ENCODE measurements at regions of chr16 and their contacts with region 1.

Region 1: GRCh38 chr16:27374804-27375425 is 27.1 kb upstream of the IL21R start:
- DNase-seq: peak in 37 of 42 donors; percentile 7 to 76 (median 54)

Region 2: GRCh38 chr16:27199736-27200135 is 175.2 kb before region 1 on chr16:
- intact Hi-C with region 1: loop called (anchors 10 kb)
- DNase-seq: no peak

Region 3: DNA sequence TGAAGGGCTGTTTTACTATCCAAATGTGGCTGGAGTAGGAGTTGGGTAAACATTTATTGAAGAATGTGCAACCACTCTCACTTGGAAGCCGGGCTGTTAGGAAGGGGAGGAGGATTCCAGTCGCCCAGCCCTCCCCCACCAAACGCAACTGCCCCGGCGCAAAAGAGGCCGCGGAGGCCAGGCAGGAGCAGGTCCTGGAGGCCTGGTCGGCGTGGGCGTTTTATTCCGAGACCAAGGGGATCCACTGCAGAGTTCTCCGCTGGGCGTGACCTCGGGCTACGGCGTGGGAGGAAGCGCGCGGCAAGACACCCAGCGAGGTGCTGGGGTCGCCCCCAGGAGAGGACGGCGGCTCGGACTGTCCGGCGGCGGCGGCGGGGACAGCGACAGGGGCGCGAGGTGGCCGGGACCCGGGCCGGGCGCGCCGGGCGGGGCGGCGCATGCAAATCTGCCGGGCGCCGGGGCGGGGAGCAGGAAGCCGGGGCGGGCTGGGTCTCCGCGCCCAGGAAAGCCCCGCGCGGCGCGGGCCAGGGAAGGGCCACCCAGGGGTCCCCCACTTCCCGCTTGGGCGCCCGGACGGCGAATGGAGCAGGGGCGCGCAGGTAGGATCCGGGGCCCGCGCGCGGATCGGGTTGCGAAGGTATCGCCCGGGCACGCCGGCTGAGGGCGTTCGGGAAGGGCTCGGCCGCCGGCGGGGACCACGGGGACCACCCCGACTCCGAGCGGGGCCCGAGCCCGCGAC is 61.3 kb before region 1 on chr16 and contains the start of gene IL4R:
- intact Hi-C with region 1: no loop called
- DNase-seq: peak in 13 of 42 donors; percentile 12 to 52 (median 32)